Activated CD4-positive, alpha-beta memory T cell treated with anti-CD3 and anti-CD28 coated beads for 36 hours (primary cell): ENCODE measurements at regions of chr4 and their contacts with region 1.

Region 1: DNA sequence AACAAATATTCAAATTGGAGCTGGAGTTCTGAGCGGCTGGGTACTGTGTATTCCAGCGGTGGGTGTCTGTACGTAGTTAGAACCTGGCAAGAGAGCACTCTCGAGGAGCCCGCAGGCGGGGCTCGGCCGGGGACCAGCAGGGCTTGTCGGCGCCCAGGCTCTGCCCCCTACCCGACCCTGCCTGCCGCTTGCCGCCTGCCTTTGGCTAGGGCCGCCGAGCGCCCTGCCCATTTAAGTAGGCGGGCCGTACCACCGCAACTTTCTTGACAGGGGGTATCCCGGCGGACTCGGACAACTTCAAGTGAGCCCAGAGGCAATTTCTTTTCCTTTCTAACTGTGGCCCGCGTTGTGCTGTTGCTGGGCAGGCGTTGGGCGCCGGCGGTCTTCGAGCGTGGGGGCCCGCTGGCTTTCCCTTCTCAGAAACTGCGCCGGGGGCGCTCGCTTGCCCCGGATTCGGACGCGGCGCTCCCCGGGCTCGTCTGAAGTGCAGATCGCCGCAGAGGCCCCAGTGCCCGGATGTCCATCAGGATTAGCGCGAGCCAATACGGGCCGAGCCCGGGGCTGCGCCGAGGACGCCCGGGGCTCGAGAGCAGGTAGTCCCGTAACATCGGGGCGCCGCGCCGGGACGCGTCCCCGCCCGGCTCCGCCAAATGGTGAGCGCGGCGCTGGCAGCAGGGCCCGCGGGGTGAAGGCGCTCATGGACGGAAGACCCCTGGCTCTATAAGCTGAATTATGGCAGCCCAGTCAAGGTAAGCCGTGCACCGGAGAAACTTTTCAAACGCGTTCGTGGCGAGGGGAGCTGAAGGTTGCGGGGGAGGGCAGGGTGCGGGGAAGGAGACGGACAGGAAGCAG is 72.1 kb downstream of the AFF1 start:
- DNase-seq: peak; percentile 90
- H3K4me3 Mint-ChIP-seq: peak overlapping the region; percentile 91
- H3K27ac Mint-ChIP-seq: peak overlapping the region; percentile 97
- H3K4me1 Mint-ChIP-seq: peaks cover 48% of the 10 kb centered on the region
- H3K27me3 Mint-ChIP-seq: no peaks in the 10 kb centered on the region

Region 2: GRCh38 chr4:86921608-86922252 is 85.2 kb before region 1 on chr4:
- CTCF ChIA-PET with region 1: interaction called, 23 read pairs
- POLR2A ChIA-PET with region 1: interaction called, 3 read pairs
- intact Hi-C with region 1: loop called (anchors 1 kb)
- DNase-seq: no peak
- H3K4me3 Mint-ChIP-seq: no peak overlapping the region
- H3K27ac Mint-ChIP-seq: no peak overlapping the region
- H3K4me1 Mint-ChIP-seq: peaks cover 6% of the 10 kb centered on the region
- H3K27me3 Mint-ChIP-seq: no peaks in the 10 kb centered on the region

Region 3: GRCh38 chr4:86977621-86978184 is 29.2 kb before region 1 on chr4:
- CTCF ChIA-PET with region 1: interaction called, 7 read pairs
- POLR2A ChIA-PET with region 1: interaction called, 12 read pairs
- intact Hi-C with region 1: loop called (anchors 1 kb)
- DNase-seq: peak; percentile 43
- H3K4me3 Mint-ChIP-seq: no peak overlapping the region
- H3K27ac Mint-ChIP-seq: peak overlapping the region; percentile 6
- H3K4me1 Mint-ChIP-seq: peaks cover 59% of the 10 kb centered on the region
- H3K27me3 Mint-ChIP-seq: no peaks in the 10 kb centered on the region

Region 4: DNA sequence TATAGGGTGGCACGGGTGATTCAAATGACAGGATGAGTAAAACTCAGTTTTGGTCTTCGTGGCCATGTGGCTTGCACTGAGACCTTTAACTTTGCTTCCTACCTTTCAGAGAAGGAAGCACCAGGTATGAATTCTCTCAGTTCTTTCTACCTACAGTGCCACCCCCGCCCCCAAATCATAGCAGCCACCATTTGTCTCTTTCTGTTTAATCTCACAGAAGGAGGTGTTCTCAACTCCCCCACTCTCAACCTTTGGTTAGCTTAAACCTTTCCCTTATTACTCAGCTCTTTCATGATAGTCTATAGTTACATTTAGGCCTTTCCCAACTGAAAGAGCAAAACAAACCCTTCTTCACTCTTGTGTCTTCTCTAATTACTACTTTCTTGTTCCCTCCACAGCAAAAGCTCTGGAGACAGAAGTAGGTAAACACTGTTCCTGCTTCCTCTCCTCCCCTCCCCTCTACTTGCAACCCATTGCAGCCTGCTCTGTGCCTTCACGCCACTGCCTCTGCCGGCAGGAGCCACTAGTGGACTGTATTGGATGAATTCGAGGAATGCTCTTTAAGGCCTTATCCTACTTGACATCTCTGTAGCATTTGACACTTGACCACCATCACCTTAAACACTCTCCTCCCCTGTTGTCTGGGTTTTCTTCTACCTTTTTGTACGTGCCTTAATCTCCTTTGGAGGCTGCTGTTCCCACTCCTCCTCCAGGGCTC is 51.6 kb after region 1 on chr4:
- CTCF ChIA-PET with region 1: interaction called, 13 read pairs
- POLR2A ChIA-PET with region 1: interaction called, 13 read pairs
- intact Hi-C with region 1: loop called (anchors 1 kb)
- DNase-seq: peak; percentile 81
- H3K4me3 Mint-ChIP-seq: peak overlapping the region; percentile 17
- H3K27ac Mint-ChIP-seq: peak overlapping the region; percentile 78
- H3K4me1 Mint-ChIP-seq: peaks cover 70% of the 10 kb centered on the region
- H3K27me3 Mint-ChIP-seq: no peaks in the 10 kb centered on the region

Region 5: DNA sequence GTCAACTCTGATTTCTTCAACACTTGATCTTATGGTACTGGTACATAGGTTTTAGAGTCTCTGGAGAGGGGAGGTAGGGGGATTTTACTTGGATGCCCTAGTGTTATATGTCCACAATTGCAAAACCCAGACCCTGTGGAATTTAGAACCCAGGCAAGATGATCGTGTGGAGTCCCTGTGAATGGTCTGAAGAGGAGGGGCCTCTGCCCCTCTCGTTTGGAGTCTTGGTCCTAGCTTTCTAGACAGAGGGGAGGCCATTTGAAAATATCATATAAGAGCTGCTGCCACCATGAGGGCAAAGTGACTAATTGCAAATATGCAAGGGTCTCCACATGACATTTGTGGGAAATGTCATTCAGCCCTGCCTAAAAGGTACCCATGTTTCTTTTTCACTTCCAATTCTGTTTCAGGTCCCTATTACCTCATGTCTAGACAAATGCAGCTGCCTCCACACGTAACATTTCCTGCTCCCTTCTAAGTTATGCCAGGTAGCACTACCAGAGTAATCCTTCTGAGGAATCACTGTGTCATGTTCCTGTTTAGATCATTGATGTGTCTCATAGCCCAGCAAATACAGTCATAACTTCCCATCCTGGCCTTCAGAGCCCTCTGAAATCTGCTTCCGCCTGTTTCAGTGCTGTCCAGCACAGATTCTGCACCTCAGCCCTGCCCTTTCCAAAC is 86.7 kb after region 1 on chr4:
- CTCF ChIA-PET with region 1: interaction called, 10 read pairs
- POLR2A ChIA-PET with region 1: interaction called, 12 read pairs
- intact Hi-C with region 1: loop called (anchors 1 kb)
- DNase-seq: peak; percentile 50
- H3K4me3 Mint-ChIP-seq: no peak overlapping the region
- H3K27ac Mint-ChIP-seq: peak overlapping the region; percentile 71
- H3K4me1 Mint-ChIP-seq: peaks cover 50% of the 10 kb centered on the region
- H3K27me3 Mint-ChIP-seq: no peaks in the 10 kb centered on the region

Region 6: DNA sequence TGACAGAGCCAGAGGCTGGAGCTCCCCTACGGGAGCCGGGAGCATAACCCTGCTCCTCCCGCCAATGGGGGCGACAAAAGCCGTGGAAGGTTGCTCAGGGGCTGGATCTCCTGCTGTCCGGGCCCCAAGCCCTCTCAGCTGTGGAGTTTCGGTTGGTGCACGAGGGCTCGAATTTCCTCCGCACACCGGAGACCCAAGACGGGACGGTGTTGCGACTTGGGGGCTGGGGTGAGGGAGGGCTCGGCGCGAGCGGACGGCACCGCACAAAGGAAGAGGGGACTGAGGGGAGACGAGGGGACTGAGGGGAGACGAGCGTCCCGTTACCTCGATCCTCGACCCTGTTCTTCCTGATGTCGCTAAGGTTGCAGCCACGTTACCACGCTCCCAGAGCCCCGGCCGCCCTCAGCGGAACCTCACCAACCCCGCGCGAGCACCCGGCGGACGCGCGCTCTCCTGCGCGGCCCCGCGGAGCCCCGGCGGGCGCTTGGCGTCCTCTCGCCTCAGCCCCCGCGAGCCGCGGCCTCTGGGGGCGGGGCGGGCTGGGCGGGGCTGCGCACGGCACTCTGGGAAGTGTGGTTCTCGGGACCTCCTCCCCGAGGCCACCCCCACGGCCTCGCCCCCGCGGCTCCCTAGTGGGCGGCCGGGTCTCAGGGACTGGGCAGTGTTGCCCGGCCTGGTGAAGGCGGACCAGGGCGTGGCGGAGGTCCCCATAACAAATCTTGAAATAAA is 213.4 kb after region 1 on chr4 and contains the start of gene KLHL8:
- CTCF ChIA-PET with region 1: no interaction called
- POLR2A ChIA-PET with region 1: no interaction called
- intact Hi-C with region 1: loop called (anchors 2 kb)
- DNase-seq: peak; percentile 92
- H3K4me3 Mint-ChIP-seq: peak within 1 kb of the TSS; percentile 89
- H3K27ac Mint-ChIP-seq: peak within 1 kb of the TSS; percentile 79
- H3K4me1 Mint-ChIP-seq: peaks cover 10% of the 10 kb centered on the region
- H3K27me3 Mint-ChIP-seq: no peaks in the 10 kb centered on the region
- total RNA-seq, gene KLHL8: 10.2 to 11.0 TPM